Prostate gland (tissue), 2 donors: ENCODE measurements at regions of chr2 and their contacts with region 1.

Region 1: DNA sequence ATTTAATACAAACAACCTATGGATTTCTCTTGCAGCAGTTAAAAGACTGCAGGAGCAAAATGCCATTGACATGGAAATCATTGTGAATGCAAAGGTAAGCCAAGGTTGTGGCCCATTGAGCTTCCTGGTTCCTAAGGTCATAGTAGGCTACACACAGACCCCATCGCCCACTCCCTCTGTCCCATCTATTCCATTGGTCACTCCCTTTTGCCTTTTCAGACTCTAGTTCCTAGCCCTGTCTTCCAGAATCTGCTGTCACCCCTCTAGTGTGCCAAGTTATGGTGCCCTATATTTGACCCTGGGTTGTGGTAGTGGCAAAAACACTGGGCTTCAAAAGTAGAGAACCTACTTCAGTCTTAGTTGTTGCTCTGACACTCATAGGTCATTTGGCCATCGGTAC is 44.7 kb downstream of the UGP2 start:
- DNase-seq: no peak
- H3K4me3 ChIP-seq: no peak overlapping the region
- H3K27ac ChIP-seq: no peak overlapping the region
- H3K4me1 ChIP-seq: no peaks in the 10 kb centered on the region
- H3K27me3 ChIP-seq: no peaks in the 10 kb centered on the region
- CTCF ChIP-seq: no peak
- POLR2A ChIP-seq: no peak

Region 2: DNA sequence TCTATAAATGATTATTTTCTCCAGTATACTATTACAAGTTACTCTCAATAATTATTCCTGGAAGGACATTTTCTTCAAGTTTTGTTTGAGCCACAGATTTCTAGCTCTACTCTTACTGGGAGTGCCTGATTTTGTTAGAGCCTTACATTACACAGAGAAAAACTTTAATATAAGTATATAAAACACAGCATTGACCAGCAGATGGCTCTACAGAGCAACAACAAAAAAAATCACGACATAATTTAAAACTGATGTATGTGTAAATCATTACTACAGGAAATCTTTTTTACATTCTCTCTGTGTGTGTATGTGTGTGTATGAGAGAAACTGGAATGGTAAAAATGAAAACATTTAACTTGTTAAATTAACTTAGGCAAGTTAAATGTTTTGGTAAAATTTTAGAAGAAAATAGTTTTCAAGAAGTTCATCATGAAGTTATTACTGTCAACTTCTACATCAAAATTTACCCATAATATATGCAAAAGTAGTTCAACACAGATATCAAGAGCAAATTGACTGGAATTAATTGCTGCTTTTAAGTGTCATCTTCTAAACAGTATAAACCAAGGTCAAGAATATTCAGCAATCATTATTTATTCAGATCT is 194.3 kb before region 1 on chr2:
- intact Hi-C with region 1: loop called (anchors 2 kb)
- DNase-seq: peak; percentile 12
- H3K4me3 ChIP-seq: no peak overlapping the region
- H3K27ac ChIP-seq: no peak overlapping the region
- H3K4me1 ChIP-seq: no peaks in the 10 kb centered on the region
- H3K27me3 ChIP-seq: no peaks in the 10 kb centered on the region
- CTCF ChIP-seq: peak in 3 of 4 experiments; percentile 51 to 73 (median 67)
- POLR2A ChIP-seq: no peak